Gastrocnemius medialis (tissue), 4 donors: ENCODE measurements at regions of chr7 and their contacts with region 1.

Region 1: GRCh38 chr7:111147708-111148533 is 57.0 kb downstream of the LRRN3 start:
- DNase-seq: no peak
- ATAC-seq: no peak
- H3K4me3 ChIP-seq: no peak overlapping the region
- H3K27ac ChIP-seq: no peak overlapping the region
- H3K4me1 ChIP-seq: peaks cover 30 to 31% of the 10 kb centered on the region in 2 donors
- H3K27me3 ChIP-seq: no peaks in the 10 kb centered on the region
- CTCF ChIP-seq: no peak
- POLR2A ChIP-seq: no peak

Region 2: GRCh38 chr7:111198255-111198654 is 50.3 kb after region 1 on chr7:
- in situ Hi-C with region 1: no loop called
- intact Hi-C with region 1: loop called (anchors 5 kb)
- DNase-seq: peak; percentile 36 to 57
- ATAC-seq: peak; percentile 99
- H3K4me3 ChIP-seq: no peak overlapping the region
- H3K27ac ChIP-seq: peak overlapping the region in 3 of 4 donors; percentile 58 to 71 (median 68)
- H3K4me1 ChIP-seq: peaks cover 0 to 23% of the 10 kb centered on the region in 2 donors
- H3K27me3 ChIP-seq: no peaks in the 10 kb centered on the region
- CTCF ChIP-seq: no peak
- POLR2A ChIP-seq: peak in 1 of 2 donors; percentile 21